Activated CD8-positive, alpha-beta memory T cell treated with anti-CD3 and anti-CD28 coated beads, Interleukin-2, amount 10 ng/mL, durations not matched to agents 7 days and 5 days (primary cell): ENCODE measurements at regions of chr6 and their contacts with region 1.

Region 1: GRCh38 chr6:41602864-41603608 is 35.2 kb upstream of the MDFI start:
- DNase-seq: peak; percentile 85
- ATAC-seq: peak; percentile 88
- H3K4me3 Mint-ChIP-seq: no peak overlapping the region
- H3K27ac Mint-ChIP-seq: no peak overlapping the region
- H3K4me1 Mint-ChIP-seq: peaks cover 3% of the 10 kb centered on the region
- H3K27me3 Mint-ChIP-seq: peaks cover 11% of the 10 kb centered on the region

Region 2: GRCh38 chr6:41689171-41690008 is 86.4 kb after region 1 on chr6:
- CTCF ChIA-PET with region 1: interaction called, 53 read pairs
- DNase-seq: no peak
- ATAC-seq: no peak
- H3K4me3 Mint-ChIP-seq: no peak overlapping the region
- H3K27ac Mint-ChIP-seq: no peak overlapping the region
- H3K4me1 Mint-ChIP-seq: peaks cover 10% of the 10 kb centered on the region
- H3K27me3 Mint-ChIP-seq: no peaks in the 10 kb centered on the region

Region 3: GRCh38 chr6:41775293-41776181 is 172.5 kb after region 1 on chr6:
- CTCF ChIA-PET with region 1: interaction called, 11 read pairs
- DNase-seq: peak; percentile 65
- ATAC-seq: peak; percentile 43
- H3K4me3 Mint-ChIP-seq: no peak overlapping the region
- H3K27ac Mint-ChIP-seq: no peak overlapping the region
- H3K4me1 Mint-ChIP-seq: peaks cover 6% of the 10 kb centered on the region
- H3K27me3 Mint-ChIP-seq: no peaks in the 10 kb centered on the region

Region 4: GRCh38 chr6:41878246-41878645 is 275.2 kb after region 1 on chr6:
- CTCF ChIA-PET with region 1: no interaction called
- DNase-seq: no peak
- ATAC-seq: no peak
- H3K4me3 Mint-ChIP-seq: no peak overlapping the region
- H3K27ac Mint-ChIP-seq: no peak overlapping the region
- H3K4me1 Mint-ChIP-seq: no peaks in the 10 kb centered on the region
- H3K27me3 Mint-ChIP-seq: no peaks in the 10 kb centered on the region